PC-9 (cell line): ENCODE measurements at regions of chr5 and their contacts with region 1.

Region 1: DNA sequence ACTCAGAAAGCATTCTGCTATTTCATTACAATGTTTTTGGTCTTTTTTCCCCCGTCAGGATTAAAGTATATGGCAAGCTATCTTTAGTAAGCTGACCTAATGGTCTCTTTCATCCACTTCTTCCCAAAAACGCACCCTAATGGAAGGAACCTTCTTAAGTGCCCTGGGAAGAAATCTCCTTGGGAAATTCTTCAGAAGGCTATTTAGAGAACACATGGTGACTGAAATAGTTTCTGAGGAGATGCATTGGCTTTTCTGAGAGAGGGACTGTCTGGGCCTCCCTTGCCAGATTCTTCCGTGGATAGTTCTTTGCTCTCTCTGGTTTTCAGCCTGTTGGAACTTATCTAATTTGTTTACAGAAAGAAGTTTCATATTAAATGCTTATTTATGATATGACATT is 524.1 kb upstream of the MEF2C start:
- DNase-seq: no peak
- H3K4me3 ChIP-seq: no peak overlapping the region
- H3K27ac ChIP-seq: no peak overlapping the region
- H3K4me1 ChIP-seq: no peaks in the 10 kb centered on the region
- H3K27me3 ChIP-seq: no peaks in the 10 kb centered on the region
- CTCF ChIP-seq: no peak

Region 2: DNA sequence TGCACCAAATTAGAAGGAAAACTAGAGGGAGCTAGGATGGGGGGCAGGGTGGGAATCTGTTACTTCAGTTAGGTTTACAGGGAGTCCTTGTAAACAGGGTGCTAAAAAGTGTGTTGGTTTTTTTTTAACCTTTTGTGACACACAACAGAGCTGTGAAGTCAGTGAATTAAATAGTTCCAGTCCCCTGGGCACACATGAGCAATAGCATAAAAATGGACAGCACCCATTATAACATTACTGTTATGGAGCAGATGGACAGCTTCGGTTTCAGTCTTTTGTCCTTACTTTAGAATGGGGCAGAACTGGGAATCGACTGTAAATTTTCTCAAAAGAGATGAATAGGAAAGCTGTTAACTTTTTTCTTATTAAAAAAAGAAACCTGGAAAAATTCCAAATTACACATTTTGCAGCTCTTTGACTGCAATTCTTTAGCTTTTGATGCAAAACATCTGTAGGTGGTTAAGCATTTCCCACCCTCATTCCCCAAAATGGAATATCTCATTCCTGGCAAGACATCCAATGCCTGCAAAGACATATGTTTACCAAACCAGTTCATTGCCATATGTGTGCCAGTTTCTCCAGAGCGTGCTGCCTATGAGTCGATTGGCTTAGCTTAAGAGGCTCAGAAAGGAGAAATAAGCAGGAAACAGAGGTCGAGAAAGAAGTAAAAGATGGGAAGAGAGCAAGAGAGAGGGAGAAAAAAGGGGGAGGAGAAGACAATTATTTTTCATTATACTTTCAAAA is 926.1 kb before region 1 on chr5:
- CTCF ChIA-PET with region 1: no interaction called
- POLR2A ChIA-PET with region 1: interaction called, 11 read pairs
- intact Hi-C with region 1: no loop called
- DNase-seq: no peak
- H3K4me3 ChIP-seq: no peak overlapping the region
- H3K27ac ChIP-seq: no peak overlapping the region
- H3K4me1 ChIP-seq: no peaks in the 10 kb centered on the region
- H3K27me3 ChIP-seq: no peaks in the 10 kb centered on the region
- CTCF ChIP-seq: no peak